Activated CD4-positive, alpha-beta T cell treated with anti-CD3 and anti-CD28 coated beads for 36 hours (primary cell): ENCODE measurements at regions of chr4 and their contacts with region 1.

Region 1: GRCh38 chr4:89226665-89227574 is 80.7 kb downstream of the GPRIN3 start:
- DNase-seq: peak; percentile 85
- ATAC-seq: peak; percentile 85
- H3K4me3 Mint-ChIP-seq: no peak overlapping the region
- H3K27ac Mint-ChIP-seq: no peak overlapping the region
- H3K4me1 Mint-ChIP-seq: peaks cover 15% of the 10 kb centered on the region
- H3K27me3 Mint-ChIP-seq: no peaks in the 10 kb centered on the region

Region 2: DNA sequence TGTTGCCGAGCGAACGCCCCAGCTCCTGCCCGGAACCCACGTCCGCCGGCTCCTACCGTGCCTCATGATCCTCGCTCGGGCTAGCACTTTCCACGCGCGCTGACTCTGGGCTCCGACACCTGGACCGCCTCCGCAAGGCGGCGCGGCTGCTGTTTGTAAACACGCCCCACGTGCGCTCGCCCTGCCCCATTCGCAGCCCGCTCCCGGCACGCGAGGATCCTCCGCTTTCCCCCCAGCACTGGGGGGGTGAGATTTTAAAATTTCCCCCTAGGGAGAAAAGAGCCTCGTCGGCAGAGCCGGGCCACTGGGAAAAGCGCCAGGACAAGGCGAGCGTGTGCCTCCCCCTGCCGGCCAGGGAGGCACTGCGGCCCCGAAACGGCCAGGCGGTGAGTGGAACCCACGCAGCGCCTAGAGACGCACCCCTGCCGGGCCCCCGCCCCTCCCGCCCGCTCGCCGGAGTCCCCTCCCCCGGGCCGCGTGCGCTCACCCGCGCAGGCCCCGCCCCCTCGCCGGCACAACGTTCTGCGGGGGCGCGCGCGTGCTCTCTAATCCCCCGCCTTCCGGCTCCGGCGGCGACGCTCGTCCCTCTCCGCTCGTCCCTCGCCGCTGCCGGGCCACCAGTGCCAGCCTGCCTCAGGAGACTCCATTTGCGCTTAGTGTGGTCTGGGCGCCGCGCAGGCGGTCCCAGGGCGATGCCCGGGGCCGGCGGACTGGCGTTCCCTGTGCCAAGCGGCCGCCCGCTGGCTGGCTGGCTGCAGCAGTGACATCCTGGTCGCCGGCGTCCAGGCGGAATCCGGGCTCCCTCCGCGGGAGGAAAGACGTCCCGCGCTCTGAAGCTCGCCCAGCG is 115.7 kb before region 1 on chr4 and contains the start of gene TIGD2:
- CTCF ChIA-PET with region 1: no interaction called
- POLR2A ChIA-PET with region 1: no interaction called
- intact Hi-C with region 1: no loop called
- DNase-seq: peak; percentile 93
- ATAC-seq: peak; percentile 95
- H3K4me3 Mint-ChIP-seq: peak within 1 kb of the TSS; percentile 73
- H3K27ac Mint-ChIP-seq: peak within 1 kb of the TSS; percentile 86
- H3K4me1 Mint-ChIP-seq: peaks cover 18% of the 10 kb centered on the region
- H3K27me3 Mint-ChIP-seq: peaks cover 16% of the 10 kb centered on the region
- total RNA-seq, gene TIGD2: 2.1 to 2.3 TPM

Region 3: DNA sequence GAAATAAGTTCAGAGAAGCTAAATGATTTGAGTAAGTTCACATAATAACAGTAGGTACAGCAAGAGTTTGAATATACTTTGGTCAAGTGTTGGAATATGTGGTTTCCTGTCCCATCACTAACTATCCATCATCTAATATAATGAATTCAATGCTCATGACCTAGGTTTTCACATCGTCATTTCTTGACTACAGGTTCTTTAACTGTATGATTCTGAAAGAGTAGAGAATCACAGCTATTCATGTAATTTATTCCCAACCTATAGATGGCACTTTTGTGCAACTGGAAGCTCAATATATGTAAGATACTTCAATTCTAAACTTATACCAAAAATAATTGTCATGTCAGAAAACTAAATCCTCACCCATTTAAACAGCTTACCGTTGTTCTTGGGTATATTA is 62.5 kb before region 1 on chr4:
- CTCF ChIA-PET with region 1: interaction called, 10 read pairs
- POLR2A ChIA-PET with region 1: no interaction called
- intact Hi-C with region 1: loop called in 1 of 2 experiments (anchors 5 kb)
- DNase-seq: no peak
- ATAC-seq: peak; percentile 49
- H3K4me3 Mint-ChIP-seq: no peak overlapping the region
- H3K27ac Mint-ChIP-seq: no peak overlapping the region
- H3K4me1 Mint-ChIP-seq: no peaks in the 10 kb centered on the region
- H3K27me3 Mint-ChIP-seq: peaks cover 5% of the 10 kb centered on the region

Region 4: GRCh38 chr4:89254847-89255246 is 27.9 kb after region 1 on chr4:
- CTCF ChIA-PET with region 1: interaction called, 19 read pairs
- POLR2A ChIA-PET with region 1: no interaction called
- intact Hi-C with region 1: no loop called
- DNase-seq: peak; percentile 64
- ATAC-seq: peak; percentile 72
- H3K4me3 Mint-ChIP-seq: no peak overlapping the region
- H3K27ac Mint-ChIP-seq: peak overlapping the region; percentile 44
- H3K4me1 Mint-ChIP-seq: peaks cover 71% of the 10 kb centered on the region
- H3K27me3 Mint-ChIP-seq: no peaks in the 10 kb centered on the region

Region 5: DNA sequence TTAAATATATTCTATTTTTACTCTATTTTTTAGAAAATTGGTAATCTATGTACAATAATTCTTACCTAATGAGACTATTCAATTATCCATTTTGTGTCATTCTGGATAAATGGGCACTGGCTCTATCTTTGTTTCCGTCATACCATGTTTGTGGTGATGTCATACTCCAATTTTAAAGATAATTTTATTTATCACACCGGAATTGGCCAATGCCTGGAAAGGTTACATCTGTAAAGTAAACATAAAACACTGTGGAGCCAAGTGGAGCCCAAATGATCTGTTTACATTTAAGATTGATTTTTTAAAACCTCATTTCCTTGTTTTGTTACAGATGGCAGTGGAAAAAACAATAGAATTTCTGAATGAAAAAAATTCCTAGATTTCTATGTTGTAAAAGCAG is 200.8 kb after region 1 on chr4:
- CTCF ChIA-PET with region 1: interaction called, 23 read pairs
- POLR2A ChIA-PET with region 1: no interaction called
- intact Hi-C with region 1: no loop called
- DNase-seq: no peak
- ATAC-seq: no peak
- H3K4me3 Mint-ChIP-seq: no peak overlapping the region
- H3K27ac Mint-ChIP-seq: no peak overlapping the region
- H3K4me1 Mint-ChIP-seq: no peaks in the 10 kb centered on the region
- H3K27me3 Mint-ChIP-seq: peaks cover 2% of the 10 kb centered on the region

Region 6: GRCh38 chr4:89773805-89774204 is 546.9 kb after region 1 on chr4:
- CTCF ChIA-PET with region 1: no interaction called
- POLR2A ChIA-PET with region 1: no interaction called
- intact Hi-C with region 1: no loop called
- DNase-seq: no peak
- ATAC-seq: no peak
- H3K4me3 Mint-ChIP-seq: no peak overlapping the region
- H3K27ac Mint-ChIP-seq: no peak overlapping the region
- H3K4me1 Mint-ChIP-seq: no peaks in the 10 kb centered on the region
- H3K27me3 Mint-ChIP-seq: peaks cover 4% of the 10 kb centered on the region

Region 7: GRCh38 chr4:89906777-89907521 is 680.0 kb after region 1 on chr4:
- CTCF ChIA-PET with region 1: no interaction called
- POLR2A ChIA-PET with region 1: no interaction called
- intact Hi-C with region 1: loop called (anchors 2 to 5 kb)
- DNase-seq: no peak
- ATAC-seq: peak; percentile 93
- H3K4me3 Mint-ChIP-seq: no peak overlapping the region
- H3K27ac Mint-ChIP-seq: no peak overlapping the region
- H3K4me1 Mint-ChIP-seq: peaks cover 2% of the 10 kb centered on the region
- H3K27me3 Mint-ChIP-seq: no peaks in the 10 kb centered on the region